Ascending aorta (tissue), 2 donors: ENCODE measurements at regions of chr11 and their contacts with region 1.

Region 1: GRCh38 chr11:71448257-71449171 is at the start of gene DHCR7:
- DNase-seq: peak; percentile 82 to 98
- H3K4me3 ChIP-seq: peak within 1 kb of the TSS; percentile 79 to 95
- H3K27ac ChIP-seq: peak within 1 kb of the TSS; percentile 75 to 79
- H3K4me1 ChIP-seq: peaks cover 3 to 20% of the 10 kb centered on the region in 2 donors
- H3K27me3 ChIP-seq: no peaks in the 10 kb centered on the region
- CTCF ChIP-seq: peak in 1 of 3 experiments; percentile 11
- total RNA-seq, gene DHCR7: 66.2 TPM

Region 2: GRCh38 chr11:71298761-71299181 is 149.7 kb before region 1 on chr11:
- intact Hi-C with region 1: loop called (anchors 1 kb)
- DNase-seq: peak in 1 of 2 donors; percentile 52
- H3K4me3 ChIP-seq: no peak overlapping the region
- H3K27ac ChIP-seq: peak overlapping the region in 1 of 2 donors; percentile 39
- H3K4me1 ChIP-seq: peaks cover 5 to 15% of the 10 kb centered on the region in 2 donors
- H3K27me3 ChIP-seq: no peaks in the 10 kb centered on the region
- CTCF ChIP-seq: no peak

Region 3: GRCh38 chr11:71459096-71459766 is 10.7 kb after region 1 on chr11:
- intact Hi-C with region 1: no loop called
- DNase-seq: no peak
- H3K4me3 ChIP-seq: no peak overlapping the region
- H3K27ac ChIP-seq: no peak overlapping the region
- H3K4me1 ChIP-seq: peaks cover 0 to 4% of the 10 kb centered on the region in 2 donors
- H3K27me3 ChIP-seq: no peaks in the 10 kb centered on the region
- CTCF ChIP-seq: no peak

Region 4: DNA sequence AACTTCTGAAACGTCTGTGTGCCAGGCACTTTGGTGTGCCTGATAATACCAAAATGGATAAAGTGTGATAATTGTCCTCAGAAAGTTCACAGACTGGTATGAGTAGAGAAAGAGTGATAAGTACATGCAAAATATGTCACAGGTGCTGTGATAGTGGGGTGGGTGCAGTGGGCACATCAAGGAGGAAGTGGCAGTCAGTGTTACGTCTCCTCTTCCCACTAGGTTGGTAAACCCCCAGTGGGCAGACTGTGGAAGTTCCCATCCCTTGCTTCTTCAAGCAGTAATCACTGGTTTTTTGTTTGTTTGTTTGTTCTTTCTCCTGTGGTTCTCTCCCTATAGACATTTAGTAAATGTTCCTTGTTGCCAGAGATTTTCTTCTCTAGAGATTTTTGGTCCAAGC is 485.7 kb after region 1 on chr11:
- intact Hi-C with region 1: loop called (anchors 10 kb)
- DNase-seq: no peak
- H3K4me3 ChIP-seq: no peak overlapping the region
- H3K27ac ChIP-seq: peak overlapping the region in 1 of 2 donors; percentile 43
- H3K4me1 ChIP-seq: peaks cover 0 to 21% of the 10 kb centered on the region in 2 donors
- H3K27me3 ChIP-seq: no peaks in the 10 kb centered on the region
- CTCF ChIP-seq: no peak